Heart left ventricle (tissue), 16 donors: ENCODE measurements at regions of chr11 and their contacts with region 1.

Region 1: DNA sequence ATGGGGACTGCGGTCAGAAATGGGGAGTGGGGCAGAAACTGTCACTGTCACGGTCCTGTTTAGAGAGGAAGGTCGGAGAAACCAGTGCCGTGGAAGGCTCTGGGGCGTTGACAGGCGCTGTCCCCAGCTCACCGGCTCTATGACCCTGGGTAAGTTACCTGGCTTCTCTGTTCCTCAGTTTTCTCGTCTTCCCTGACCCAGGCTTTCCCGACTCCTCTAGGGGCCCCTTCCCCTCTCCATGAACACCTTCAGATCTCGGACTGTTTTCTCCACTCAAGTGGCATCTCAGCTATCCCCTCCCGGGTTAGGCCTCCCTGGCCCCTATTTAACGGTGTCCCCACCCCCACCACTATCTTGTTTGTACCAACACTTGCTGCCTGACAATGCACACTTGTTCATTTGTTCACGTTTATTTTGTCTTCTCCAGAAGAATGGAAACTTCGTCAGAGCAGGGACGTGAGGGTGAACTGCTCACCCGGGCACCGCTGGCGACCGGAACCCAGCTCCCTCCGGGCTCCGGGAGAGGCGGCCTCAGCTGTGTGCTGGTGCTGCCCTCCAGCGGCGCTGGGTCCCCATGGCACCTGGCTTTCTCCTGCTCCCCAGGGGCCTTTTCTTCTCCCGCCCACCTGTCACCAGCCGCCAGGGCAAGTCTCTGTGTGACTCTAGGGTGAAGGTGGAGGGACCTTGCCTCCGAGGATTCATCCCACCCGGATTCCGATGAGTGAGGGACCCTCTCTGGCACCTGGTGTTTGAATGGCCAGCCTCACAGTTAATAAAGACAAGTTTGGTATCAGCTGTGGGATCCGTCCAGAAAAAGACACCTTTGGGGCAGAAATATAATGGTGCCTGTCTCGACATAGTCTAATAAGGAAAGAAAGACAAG is 33.1 kb upstream of the SLC35C1 start:
- DNase-seq: peak; percentile 81 to 91 (median 88)
- ATAC-seq: peak; percentile 93 to 97 (median 96)
- H3K4me3 ChIP-seq: peak overlapping the region; percentile 18 to 65 (median 56)
- H3K27ac ChIP-seq: peak overlapping the region; percentile 45 to 84 (median 72)
- H3K4me1 ChIP-seq: peaks cover 0 to 9% (median 4%) of the 10 kb centered on the region in 12 donors
- H3K27me3 ChIP-seq: no peaks in the 10 kb centered on the region
- CTCF ChIP-seq: peak; percentile 90 to 97 (median 94)
- POLR2A ChIP-seq: peak in 1 of 2 donors; percentile 21

Region 2: GRCh38 chr11:45339729-45340519 is 431.9 kb before region 1 on chr11:
- intact Hi-C with region 1: loop called in 8 of 10 experiments (anchors 1 to 5 kb)
- DNase-seq: peak; percentile 91 to 96 (median 96)
- ATAC-seq: peak; percentile 85 to 96 (median 94)
- H3K4me3 ChIP-seq: peak overlapping the region in 9 of 12 donors; percentile 7 to 35 (median 18)
- H3K27ac ChIP-seq: peak overlapping the region in 4 of 12 donors; percentile 13 to 39 (median 24)
- H3K4me1 ChIP-seq: peaks cover 0 to 10% (median 4%) of the 10 kb centered on the region in 12 donors
- H3K27me3 ChIP-seq: peaks cover 0 to 9% (median 0%) of the 10 kb centered on the region in 9 donors
- CTCF ChIP-seq: peak; percentile 83 to 96 (median 94)
- POLR2A ChIP-seq: peak in 1 of 2 donors; percentile 14

Region 3: GRCh38 chr11:45405916-45406670 is 365.7 kb before region 1 on chr11:
- intact Hi-C with region 1: loop called in 5 of 10 experiments (anchors 5 to 10 kb)
- DNase-seq: no peak
- ATAC-seq: no peak
- H3K4me3 ChIP-seq: no peak overlapping the region
- H3K27ac ChIP-seq: no peak overlapping the region
- H3K4me1 ChIP-seq: no peaks in the 10 kb centered on the region
- H3K27me3 ChIP-seq: peaks cover 0 to 17% (median 0%) of the 10 kb centered on the region in 9 donors
- CTCF ChIP-seq: peak; percentile 26 to 63 (median 50)
- POLR2A ChIP-seq: no peak

Region 4: GRCh38 chr11:45543808-45544422 is 227.9 kb before region 1 on chr11:
- intact Hi-C with region 1: loop called in 5 of 10 experiments (anchors 2 to 10 kb)
- DNase-seq: no peak
- ATAC-seq: no peak
- H3K4me3 ChIP-seq: no peak overlapping the region
- H3K27ac ChIP-seq: no peak overlapping the region
- H3K4me1 ChIP-seq: no peaks in the 10 kb centered on the region
- H3K27me3 ChIP-seq: peaks cover 0 to 32% (median 3%) of the 10 kb centered on the region in 9 donors
- CTCF ChIP-seq: no peak
- POLR2A ChIP-seq: no peak

Region 5: GRCh38 chr11:45655347-45655756 is 116.5 kb before region 1 on chr11:
- intact Hi-C with region 1: loop called in 6 of 10 experiments (anchors 1 to 5 kb)
- DNase-seq: peak; percentile 64 to 86 (median 72)
- ATAC-seq: peak in 3 of 4 donors; percentile 41 to 65 (median 59)
- H3K4me3 ChIP-seq: no peak overlapping the region
- H3K27ac ChIP-seq: no peak overlapping the region
- H3K4me1 ChIP-seq: peaks cover 4 to 36% (median 22%) of the 10 kb centered on the region in 12 donors
- H3K27me3 ChIP-seq: peaks cover 0 to 9% (median 0%) of the 10 kb centered on the region in 9 donors
- CTCF ChIP-seq: peak in 11 of 12 donors; percentile 88 to 95 (median 92)
- POLR2A ChIP-seq: no peak

Region 6: GRCh38 chr11:45815449-45816146 is 43.8 kb after region 1 on chr11:
- intact Hi-C with region 1: no loop called
- DNase-seq: no peak
- ATAC-seq: no peak
- H3K4me3 ChIP-seq: no peak overlapping the region
- H3K27ac ChIP-seq: no peak overlapping the region
- H3K4me1 ChIP-seq: peaks cover 0 to 1% (median 0%) of the 10 kb centered on the region in 12 donors
- H3K27me3 ChIP-seq: no peaks in the 10 kb centered on the region
- CTCF ChIP-seq: no peak
- POLR2A ChIP-seq: no peak